ENCODE measurements at regions of chr11 and their contacts with region 1.

Region 1: DNA sequence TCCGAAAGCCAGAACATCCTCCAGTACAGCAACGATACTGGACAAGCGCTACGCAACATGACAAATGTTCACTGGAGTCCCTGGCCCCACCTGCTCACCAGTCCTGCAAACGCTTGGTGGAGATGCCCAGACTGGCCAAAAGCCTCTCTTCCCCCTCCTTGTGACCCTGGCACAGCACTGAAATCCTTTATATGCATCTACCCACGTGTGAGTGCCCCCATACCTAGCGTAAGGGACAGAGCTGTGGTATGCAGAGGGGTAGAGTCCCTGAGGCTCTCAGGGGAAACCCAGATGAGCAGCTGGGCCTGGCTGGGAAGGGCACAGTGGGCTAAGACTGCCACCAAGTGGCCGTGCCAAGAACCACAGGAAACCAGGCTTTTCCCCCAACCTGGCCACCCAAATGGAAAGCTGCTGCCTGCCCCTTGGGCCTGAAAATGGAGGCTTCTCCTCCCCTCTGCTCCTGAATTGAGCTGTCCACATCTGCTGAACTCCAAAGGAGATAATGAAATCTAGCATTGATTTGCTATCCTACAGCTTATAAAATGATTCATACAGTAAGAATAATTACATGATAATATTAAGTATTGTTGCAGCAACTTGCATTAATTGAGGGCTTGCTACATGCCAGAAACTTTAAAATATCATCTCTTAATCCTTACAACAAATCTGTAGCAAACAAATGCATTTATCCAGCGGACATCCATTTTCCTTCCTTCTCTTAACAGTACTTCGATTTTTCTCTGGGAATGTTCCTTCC is 24.8 kb upstream of the TTC12 start:
- DNase-seq: peak; percentile 46 to 67 (median 63)
- H3K4me3 ChIP-seq: no peak overlapping the region
- H3K4me3 Mint-ChIP-seq: no peak overlapping the region
- H3K27ac ChIP-seq: no peak overlapping the region
- H3K27ac Mint-ChIP-seq: peak overlapping the region in 1 of 7 donors; percentile 24
- H3K4me1 ChIP-seq: no peaks in the 10 kb centered on the region
- H3K4me1 Mint-ChIP-seq: no peaks in the 10 kb centered on the region
- H3K27me3 ChIP-seq: no peaks in the 10 kb centered on the region
- H3K27me3 Mint-ChIP-seq: peaks cover 2 to 4% (median 3%) of the 10 kb centered on the region in 3 donors
- CTCF ChIP-seq: peak; percentile 93

Region 2: GRCh38 chr11:112219476-112220232 is 1070.0 kb before region 1 on chr11:
- intact Hi-C with region 1: loop called in 1 of 2 experiments (anchors 10 kb)
- DNase-seq: peak; percentile 73 to 82 (median 77)
- H3K4me3 ChIP-seq: no peak overlapping the region
- H3K4me3 Mint-ChIP-seq: peak overlapping the region in 1 of 2 donors; percentile 44
- H3K27ac ChIP-seq: no peak overlapping the region
- H3K27ac Mint-ChIP-seq: peak overlapping the region in 2 of 7 donors; percentile 31 to 33
- H3K4me1 ChIP-seq: peaks cover 3 to 5% of the 10 kb centered on the region in 2 donors
- H3K4me1 Mint-ChIP-seq: peaks cover 14% of the 10 kb centered on the region
- H3K27me3 ChIP-seq: no peaks in the 10 kb centered on the region
- H3K27me3 Mint-ChIP-seq: peaks cover 0 to 2% (median 0%) of the 10 kb centered on the region in 3 donors
- CTCF ChIP-seq: peak; percentile 78

Region 3: DNA sequence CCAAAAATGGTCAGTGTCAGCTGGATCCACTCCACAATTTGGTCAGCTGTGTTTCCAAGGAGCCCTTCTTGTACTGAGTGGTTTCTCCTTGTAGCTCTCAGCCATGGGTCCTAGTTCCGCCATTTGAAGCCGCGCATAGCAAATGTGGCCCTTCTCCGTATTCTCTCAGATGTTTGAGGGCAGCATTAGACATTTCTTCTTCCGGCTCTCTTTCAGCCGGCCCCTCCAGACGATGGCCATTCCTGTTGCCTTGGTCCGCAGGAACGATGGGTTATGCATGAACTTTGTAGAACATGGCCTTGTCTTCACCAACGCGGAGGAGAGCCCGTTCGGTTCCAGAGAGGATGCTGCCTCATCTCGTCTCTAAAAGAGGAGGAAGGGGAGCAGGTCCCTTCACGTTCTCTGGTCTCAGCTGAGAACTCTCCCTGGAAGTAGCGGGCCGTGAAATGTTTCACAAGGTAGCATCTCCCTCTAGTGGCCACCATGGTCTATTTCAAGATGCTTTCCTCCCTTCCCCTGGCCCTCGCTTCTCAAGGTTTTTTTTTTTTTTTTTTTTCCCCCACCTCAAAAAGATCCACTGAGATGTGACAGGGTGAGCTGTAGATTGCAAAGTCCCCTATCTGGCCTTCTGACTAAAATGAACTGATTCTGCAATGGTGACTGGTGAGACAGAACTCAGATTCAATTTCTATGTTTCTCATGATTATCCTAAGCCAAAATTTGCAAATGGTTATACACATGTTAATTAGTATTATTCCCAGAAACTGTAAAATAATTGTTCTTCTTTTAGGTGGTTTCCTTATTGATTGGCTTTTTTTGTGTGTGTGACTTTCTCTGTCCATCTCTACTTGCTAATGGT is 1009.1 kb before region 1 on chr11:
- intact Hi-C with region 1: loop called in 1 of 2 experiments (anchors 10 kb)
- DNase-seq: peak; percentile 69 to 82 (median 76)
- H3K4me3 ChIP-seq: peak overlapping the region; percentile 44 to 85 (median 49)
- H3K4me3 Mint-ChIP-seq: peak overlapping the region; percentile 87 to 95
- H3K27ac ChIP-seq: peak overlapping the region in 1 of 2 donors; percentile 33
- H3K27ac Mint-ChIP-seq: peak overlapping the region in 4 of 7 donors; percentile 57 to 79 (median 70)
- H3K4me1 ChIP-seq: peaks cover 13 to 21% of the 10 kb centered on the region in 2 donors
- H3K4me1 Mint-ChIP-seq: peaks cover 33% of the 10 kb centered on the region
- H3K27me3 ChIP-seq: no peaks in the 10 kb centered on the region
- H3K27me3 Mint-ChIP-seq: peaks cover 0 to 4% (median 2%) of the 10 kb centered on the region in 3 donors
- CTCF ChIP-seq: peak; percentile 65

Region 4: GRCh38 chr11:112289588-112290492 is 999.8 kb before region 1 on chr11:
- intact Hi-C with region 1: loop called (anchors 5 to 10 kb)
- DNase-seq: peak; percentile 56 to 71 (median 69)
- H3K4me3 ChIP-seq: peak overlapping the region; percentile 19 to 62 (median 20)
- H3K4me3 Mint-ChIP-seq: peak overlapping the region; percentile 65 to 78
- H3K27ac ChIP-seq: no peak overlapping the region
- H3K27ac Mint-ChIP-seq: peak overlapping the region in 3 of 7 donors; percentile 36 to 64 (median 50)
- H3K4me1 ChIP-seq: peaks cover 25 to 27% of the 10 kb centered on the region in 2 donors
- H3K4me1 Mint-ChIP-seq: peaks cover 40% of the 10 kb centered on the region
- H3K27me3 ChIP-seq: no peaks in the 10 kb centered on the region
- H3K27me3 Mint-ChIP-seq: peaks cover 2 to 4% (median 3%) of the 10 kb centered on the region in 3 donors
- CTCF ChIP-seq: peak; percentile 85

Region 5: DNA sequence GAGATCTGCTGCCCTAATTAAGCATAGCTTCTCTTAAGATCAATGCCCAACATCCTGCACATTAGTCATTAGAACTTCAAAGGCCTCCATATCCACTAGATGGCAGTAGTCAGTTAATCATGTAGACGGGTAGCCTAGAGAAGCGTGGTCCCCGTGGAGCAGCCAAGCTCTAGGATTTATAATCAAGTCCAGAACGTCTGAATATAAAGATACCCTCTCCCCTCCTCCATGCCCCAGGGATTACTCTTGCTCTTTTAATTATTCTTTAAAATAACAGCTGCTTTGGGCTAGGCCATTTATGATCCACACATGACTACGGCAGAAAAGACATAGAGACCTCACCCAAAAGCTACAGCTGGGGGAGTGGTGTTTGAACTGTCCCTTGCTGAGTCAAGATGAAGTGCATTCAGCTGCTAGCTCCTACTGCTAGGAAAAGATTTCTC is 701.3 kb before region 1 on chr11:
- intact Hi-C with region 1: loop called (anchors 2 kb)
- DNase-seq: peak; percentile 57 to 79 (median 73)
- H3K4me3 ChIP-seq: no peak overlapping the region
- H3K4me3 Mint-ChIP-seq: peak overlapping the region in 1 of 2 donors; percentile 13
- H3K27ac ChIP-seq: no peak overlapping the region
- H3K27ac Mint-ChIP-seq: no peak overlapping the region
- H3K4me1 ChIP-seq: peaks cover 0 to 5% of the 10 kb centered on the region in 2 donors
- H3K4me1 Mint-ChIP-seq: peaks cover 14% of the 10 kb centered on the region
- H3K27me3 ChIP-seq: no peaks in the 10 kb centered on the region
- H3K27me3 Mint-ChIP-seq: peaks cover 1 to 5% (median 4%) of the 10 kb centered on the region in 3 donors
- CTCF ChIP-seq: peak; percentile 76

Region 6: DNA sequence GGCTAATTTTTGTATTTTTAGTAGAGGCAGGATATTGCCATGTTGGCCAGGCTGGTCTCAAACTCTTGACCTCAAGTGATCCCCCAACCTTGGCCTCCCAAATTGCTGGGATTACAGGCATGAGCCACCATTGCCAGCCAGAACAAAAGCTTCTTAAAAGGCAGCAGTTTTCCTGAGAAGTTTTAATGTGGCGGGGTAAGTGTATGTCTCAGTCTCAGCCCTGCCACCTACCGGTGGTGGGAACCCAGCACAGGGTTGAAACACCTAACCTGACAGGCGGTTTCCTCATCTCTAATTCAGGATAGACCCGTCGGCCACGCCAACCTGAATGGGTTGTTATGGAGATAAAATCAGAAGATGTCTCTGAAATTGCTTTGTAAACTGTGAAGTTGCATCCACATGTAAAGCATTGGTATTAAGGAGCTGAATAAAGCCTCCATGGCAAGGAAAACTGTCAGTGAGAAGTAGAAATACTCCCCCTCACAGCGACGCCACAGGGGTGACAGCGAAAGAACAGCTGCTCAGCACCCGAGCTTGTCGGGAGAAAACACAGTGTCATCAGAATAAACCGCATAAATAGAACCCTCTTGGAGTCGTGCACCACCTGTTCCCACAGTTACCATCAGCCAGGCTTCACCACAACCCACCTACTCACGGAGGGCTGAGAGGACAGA is 494.3 kb before region 1 on chr11:
- intact Hi-C with region 1: loop called in 1 of 2 experiments (anchors 10 kb)
- DNase-seq: peak; percentile 5 to 35 (median 16)
- H3K4me3 ChIP-seq: no peak overlapping the region
- H3K4me3 Mint-ChIP-seq: no peak overlapping the region
- H3K27ac ChIP-seq: no peak overlapping the region
- H3K27ac Mint-ChIP-seq: peak overlapping the region in 1 of 7 donors; percentile 58
- H3K4me1 ChIP-seq: no peaks in the 10 kb centered on the region
- H3K4me1 Mint-ChIP-seq: peaks cover 8% of the 10 kb centered on the region
- H3K27me3 ChIP-seq: no peaks in the 10 kb centered on the region
- H3K27me3 Mint-ChIP-seq: no peaks in the 10 kb centered on the region
- CTCF ChIP-seq: peak; percentile 46

Region 7: GRCh38 chr11:113664981-113665710 is 375.5 kb after region 1 on chr11:
- intact Hi-C with region 1: no loop called
- DNase-seq: no peak
- H3K4me3 ChIP-seq: no peak overlapping the region
- H3K4me3 Mint-ChIP-seq: no peak overlapping the region
- H3K27ac ChIP-seq: no peak overlapping the region
- H3K27ac Mint-ChIP-seq: no peak overlapping the region
- H3K4me1 ChIP-seq: no peaks in the 10 kb centered on the region
- H3K4me1 Mint-ChIP-seq: no peaks in the 10 kb centered on the region
- H3K27me3 ChIP-seq: peaks cover 0 to 5% of the 10 kb centered on the region in 2 donors
- H3K27me3 Mint-ChIP-seq: peaks cover 2 to 7% (median 2%) of the 10 kb centered on the region in 3 donors
- CTCF ChIP-seq: no peak

Measured in CD14-positive monocyte (primary cell).